Activated CD4-positive, alpha-beta T cell treated with anti-CD3 and anti-CD28 coated beads for 36 hours (primary cell): ENCODE measurements at regions of chr21 and their contacts with region 1.

Region 1: GRCh38 chr21:45554477-45555175 is 12.4 kb upstream of the SLC19A1 start:
- DNase-seq: peak; percentile 95
- ATAC-seq: peak; percentile 62
- H3K4me3 Mint-ChIP-seq: peak overlapping the region; percentile 95
- H3K27ac Mint-ChIP-seq: peak overlapping the region; percentile 97
- H3K4me1 Mint-ChIP-seq: peaks cover 33% of the 10 kb centered on the region
- H3K27me3 Mint-ChIP-seq: no peaks in the 10 kb centered on the region

Region 2: DNA sequence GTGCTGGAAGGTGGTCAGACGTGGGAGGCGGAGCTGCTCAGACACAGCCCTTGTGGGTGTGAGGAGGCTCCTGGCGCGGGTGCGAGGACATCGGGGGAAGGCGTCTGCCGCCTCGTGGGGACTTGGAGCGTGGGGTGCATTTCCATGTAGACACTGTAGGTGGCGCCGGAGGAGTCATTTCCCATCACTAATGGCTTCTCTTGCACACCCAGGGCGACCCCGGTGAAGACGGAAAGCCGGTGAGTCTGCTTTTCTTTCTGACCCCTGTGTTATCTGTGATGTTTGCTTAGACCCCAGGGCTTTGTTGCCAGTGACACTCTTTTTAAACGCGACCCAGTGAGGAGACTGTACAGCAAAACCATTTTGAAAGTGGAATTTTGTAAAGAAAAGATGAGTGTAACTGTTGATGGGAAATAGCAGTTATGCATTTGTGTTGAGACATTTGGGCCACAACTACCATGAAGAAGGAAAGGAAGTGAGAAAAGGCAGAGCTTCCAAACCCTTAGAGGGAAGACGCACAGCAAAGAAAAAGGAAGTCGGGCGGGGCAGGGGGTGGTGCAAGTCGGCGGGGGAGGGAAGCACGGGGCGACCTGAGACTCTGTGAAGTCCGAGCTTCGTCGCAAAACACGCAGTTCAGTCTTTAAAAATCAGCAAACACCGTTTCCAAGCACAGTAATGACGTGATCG is 76.4 kb before region 1 on chr21:
- CTCF ChIA-PET with region 1: interaction called, 4 read pairs
- POLR2A ChIA-PET with region 1: no interaction called
- intact Hi-C with region 1: loop called (anchors 2 kb)
- DNase-seq: peak; percentile 89
- ATAC-seq: peak; percentile 74
- H3K4me3 Mint-ChIP-seq: peak overlapping the region; percentile 62
- H3K27ac Mint-ChIP-seq: peak overlapping the region; percentile 84
- H3K4me1 Mint-ChIP-seq: peaks cover 35% of the 10 kb centered on the region
- H3K27me3 Mint-ChIP-seq: no peaks in the 10 kb centered on the region

Region 3: GRCh38 chr21:45542242-45542666 is 12.4 kb before region 1 on chr21 and contains the start of gene SLC19A1:
- CTCF ChIA-PET with region 1: interaction called, 3 read pairs
- POLR2A ChIA-PET with region 1: no interaction called
- intact Hi-C with region 1: loop called (anchors 1 kb)
- DNase-seq: peak; percentile 86
- ATAC-seq: peak; percentile 86
- H3K4me3 Mint-ChIP-seq: peak within 1 kb of the TSS; percentile 80
- H3K27ac Mint-ChIP-seq: peak within 1 kb of the TSS; percentile 80
- H3K4me1 Mint-ChIP-seq: peaks cover 20% of the 10 kb centered on the region
- H3K27me3 Mint-ChIP-seq: no peaks in the 10 kb centered on the region
- total RNA-seq, gene SLC19A1: 46.1 to 50.0 TPM

Region 4: DNA sequence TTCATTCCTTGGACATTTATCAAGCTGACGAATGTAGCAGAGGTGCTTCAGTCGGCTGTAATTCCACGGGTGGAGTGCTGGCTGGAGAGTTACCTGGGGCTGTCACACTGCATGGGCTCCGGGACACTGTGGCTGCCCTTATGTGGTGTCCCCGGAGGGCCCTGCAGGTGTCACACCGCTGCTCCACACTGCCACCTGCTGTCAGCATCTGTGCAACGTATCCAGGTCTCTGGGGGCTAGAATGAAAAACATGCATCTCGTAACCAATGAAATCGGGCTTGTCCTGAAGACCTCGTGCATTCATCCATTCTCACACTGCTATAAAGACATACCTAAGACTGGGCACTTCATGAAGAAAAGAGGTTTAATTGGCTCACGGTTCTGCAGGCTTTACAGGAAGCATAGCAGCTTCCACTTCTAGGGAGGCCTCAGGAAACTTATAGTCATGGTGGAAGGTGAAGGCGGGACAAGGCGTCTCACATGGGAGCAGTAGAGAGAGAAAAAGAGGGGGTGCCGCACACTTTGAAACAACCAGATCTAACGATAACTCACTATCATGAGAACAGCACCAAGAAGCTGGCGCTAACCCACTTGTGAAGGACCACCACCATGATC is 42.2 kb after region 1 on chr21:
- CTCF ChIA-PET with region 1: interaction called, 11 read pairs
- POLR2A ChIA-PET with region 1: interaction called, 5 read pairs
- intact Hi-C with region 1: loop called (anchors 1 kb)
- DNase-seq: peak; percentile 92
- ATAC-seq: peak; percentile 72
- H3K4me3 Mint-ChIP-seq: no peak overlapping the region
- H3K27ac Mint-ChIP-seq: peak overlapping the region; percentile 4
- H3K4me1 Mint-ChIP-seq: peaks cover 11% of the 10 kb centered on the region
- H3K27me3 Mint-ChIP-seq: no peaks in the 10 kb centered on the region

Region 5: DNA sequence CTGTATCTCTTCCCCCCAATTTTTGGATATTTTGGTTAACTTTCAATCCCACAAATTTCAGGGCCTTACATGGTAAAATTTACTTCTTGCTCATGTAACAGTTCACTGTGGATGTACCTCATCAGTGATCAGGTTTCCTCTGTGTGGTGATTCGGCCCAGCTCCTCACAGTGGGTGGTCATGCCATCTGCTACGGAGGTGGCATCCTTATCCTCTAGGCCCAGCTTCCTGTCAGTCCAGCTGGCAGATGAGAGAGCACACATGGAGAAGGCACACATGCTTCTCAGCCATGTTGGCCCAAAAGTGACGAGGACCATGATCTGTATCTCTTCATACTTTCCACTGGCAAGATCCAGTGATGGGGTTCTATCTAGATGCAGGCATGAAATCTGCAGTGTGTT is 116.1 kb after region 1 on chr21:
- CTCF ChIA-PET with region 1: no interaction called
- POLR2A ChIA-PET with region 1: no interaction called
- intact Hi-C with region 1: no loop called
- DNase-seq: no peak
- ATAC-seq: no peak
- H3K4me3 Mint-ChIP-seq: no peak overlapping the region
- H3K27ac Mint-ChIP-seq: no peak overlapping the region
- H3K4me1 Mint-ChIP-seq: peaks cover 3% of the 10 kb centered on the region
- H3K27me3 Mint-ChIP-seq: no peaks in the 10 kb centered on the region

Region 6: GRCh38 chr21:45768751-45769070 is 214.1 kb after region 1 on chr21:
- CTCF ChIA-PET with region 1: no interaction called
- POLR2A ChIA-PET with region 1: no interaction called
- intact Hi-C with region 1: loop called (anchors 1 kb)
- DNase-seq: peak; percentile 64
- ATAC-seq: peak; percentile 3
- H3K4me3 Mint-ChIP-seq: peak overlapping the region; percentile 62
- H3K27ac Mint-ChIP-seq: peak overlapping the region; percentile 98
- H3K4me1 Mint-ChIP-seq: peaks cover 57% of the 10 kb centered on the region
- H3K27me3 Mint-ChIP-seq: no peaks in the 10 kb centered on the region

Region 7: GRCh38 chr21:45880097-45881068 is 325.8 kb after region 1 on chr21:
- CTCF ChIA-PET with region 1: interaction called, 3 read pairs
- POLR2A ChIA-PET with region 1: no interaction called
- intact Hi-C with region 1: loop called in 1 of 2 experiments (anchors 1 kb)
- DNase-seq: peak; percentile 90
- ATAC-seq: peak; percentile 96
- H3K4me3 Mint-ChIP-seq: no peak overlapping the region
- H3K27ac Mint-ChIP-seq: peak overlapping the region; percentile 73
- H3K4me1 Mint-ChIP-seq: peaks cover 55% of the 10 kb centered on the region
- H3K27me3 Mint-ChIP-seq: no peaks in the 10 kb centered on the region

Region 8: DNA sequence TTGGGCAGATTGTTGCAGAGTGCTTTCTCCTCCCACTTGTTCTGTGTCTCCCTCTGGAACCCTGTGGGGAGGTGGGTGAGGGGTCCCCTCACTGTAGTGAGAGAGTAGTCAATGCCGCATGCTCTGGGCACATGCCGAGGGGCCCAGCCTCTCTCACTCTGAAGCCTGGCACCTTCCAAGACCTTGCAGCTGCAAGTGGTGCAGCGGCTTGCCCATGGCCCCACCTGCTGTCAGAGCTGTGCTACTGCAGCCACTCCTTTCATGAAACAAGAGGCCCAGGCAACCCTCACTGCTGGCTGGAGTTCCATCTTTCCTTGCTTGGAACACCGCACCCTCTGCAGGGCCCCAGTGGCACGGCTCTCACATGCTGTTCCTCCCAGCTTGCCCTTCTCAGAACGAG is 368.5 kb after region 1 on chr21:
- CTCF ChIA-PET with region 1: interaction called, 3 read pairs
- POLR2A ChIA-PET with region 1: no interaction called
- intact Hi-C with region 1: loop called in 1 of 2 experiments (anchors 1 kb)
- DNase-seq: peak; percentile 82
- ATAC-seq: peak; percentile 85
- H3K4me3 Mint-ChIP-seq: no peak overlapping the region
- H3K27ac Mint-ChIP-seq: no peak overlapping the region
- H3K4me1 Mint-ChIP-seq: peaks cover 12% of the 10 kb centered on the region
- H3K27me3 Mint-ChIP-seq: no peaks in the 10 kb centered on the region